ENCODE measurements at regions of chr5 and their contacts with region 1.

Region 1: GRCh38 chr5:56270568-56271392 is 37.6 kb upstream of the ANKRD55 start:
- DNase-seq: peak; percentile 65
- H3K4me3 Mint-ChIP-seq: peak overlapping the region; percentile 48
- H3K27ac Mint-ChIP-seq: peak overlapping the region; percentile 46
- H3K4me1 Mint-ChIP-seq: peaks cover 21% of the 10 kb centered on the region
- H3K27me3 Mint-ChIP-seq: no peaks in the 10 kb centered on the region

Region 2: GRCh38 chr5:56350598-56351170 is 79.9 kb after region 1 on chr5:
- intact Hi-C with region 1: loop called (anchors 1 kb)
- DNase-seq: no peak
- H3K4me3 Mint-ChIP-seq: no peak overlapping the region
- H3K27ac Mint-ChIP-seq: no peak overlapping the region
- H3K4me1 Mint-ChIP-seq: peaks cover 23% of the 10 kb centered on the region
- H3K27me3 Mint-ChIP-seq: peaks cover 2% of the 10 kb centered on the region

Region 3: DNA sequence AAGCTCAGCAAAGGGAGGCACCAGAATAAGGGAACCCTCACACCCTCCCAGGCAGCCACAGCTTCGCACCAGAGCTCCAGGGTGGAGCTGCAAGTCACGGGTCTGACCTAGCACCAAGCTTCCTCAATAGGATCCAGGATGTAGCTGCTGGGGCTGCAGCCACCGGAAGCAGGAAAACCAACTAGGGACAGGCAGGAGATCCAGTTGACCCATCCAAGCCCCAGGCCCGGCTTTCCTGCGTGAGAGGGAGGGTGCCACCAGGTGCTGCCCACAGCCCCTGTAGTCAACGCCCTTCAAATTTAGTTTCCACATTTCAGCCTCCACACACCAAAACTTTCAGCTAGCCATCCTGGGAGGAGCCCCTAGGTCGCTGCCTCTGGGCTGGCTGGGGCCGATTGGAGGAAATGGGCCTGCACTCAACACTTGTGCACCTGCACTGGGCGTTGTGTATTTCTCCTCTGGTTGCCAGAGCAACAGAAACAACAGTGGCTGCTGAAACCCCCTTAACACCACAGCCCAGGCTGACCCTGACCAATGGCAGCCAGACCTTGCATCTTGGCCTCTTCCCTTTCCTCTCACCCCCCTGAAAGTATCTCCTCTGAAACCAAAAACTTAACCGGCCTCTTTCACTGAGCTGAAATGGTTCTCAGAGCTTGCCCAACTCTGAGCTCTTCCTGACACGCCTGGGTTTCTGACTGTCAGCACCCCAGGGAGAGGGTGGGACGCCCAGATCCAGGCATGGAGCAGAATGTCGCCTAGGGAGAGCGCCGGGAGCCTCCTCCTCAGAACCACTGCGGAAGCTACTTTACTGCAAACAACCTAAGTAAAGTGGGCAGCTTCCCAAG is 318.1 kb after region 1 on chr5:
- intact Hi-C with region 1: loop called (anchors 5 kb)
- DNase-seq: peak; percentile 65
- H3K4me3 Mint-ChIP-seq: peak overlapping the region; percentile 19
- H3K27ac Mint-ChIP-seq: peak overlapping the region; percentile 78
- H3K4me1 Mint-ChIP-seq: peaks cover 50% of the 10 kb centered on the region
- H3K27me3 Mint-ChIP-seq: peaks cover 7% of the 10 kb centered on the region

Region 4: GRCh38 chr5:56649569-56649968 is 378.8 kb after region 1 on chr5:
- intact Hi-C with region 1: no loop called
- DNase-seq: no peak
- H3K4me3 Mint-ChIP-seq: no peak overlapping the region
- H3K27ac Mint-ChIP-seq: no peak overlapping the region
- H3K4me1 Mint-ChIP-seq: peaks cover 18% of the 10 kb centered on the region
- H3K27me3 Mint-ChIP-seq: peaks cover 13% of the 10 kb centered on the region

Region 5: DNA sequence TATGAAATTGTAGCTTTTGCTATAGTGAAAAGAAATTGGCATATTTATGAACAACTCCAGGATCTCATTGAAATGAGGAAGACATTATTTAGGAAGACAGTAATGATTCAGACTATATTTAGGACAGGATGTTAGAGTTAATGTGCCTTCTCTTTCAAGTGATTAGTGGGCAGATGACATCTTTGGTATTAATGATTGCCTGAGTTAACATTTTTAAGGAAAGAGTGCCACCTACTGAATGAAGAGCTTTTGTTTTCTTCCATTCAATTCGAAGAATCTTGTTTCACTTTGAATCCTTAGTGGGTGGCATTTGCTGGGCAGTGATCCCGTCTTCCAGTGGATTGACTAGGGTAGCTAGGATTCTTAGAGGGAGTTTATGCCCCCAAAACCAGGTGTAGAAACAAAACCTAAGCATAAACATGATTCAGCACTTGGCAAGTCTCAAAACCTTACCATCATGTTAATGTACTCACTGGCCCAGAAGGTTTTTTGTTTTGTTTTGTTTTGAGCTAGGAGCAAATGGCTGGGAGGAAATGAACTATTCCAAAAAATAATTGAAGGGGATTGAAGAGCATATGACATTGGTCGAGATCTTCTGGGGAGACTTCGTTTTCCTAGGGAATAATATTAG is 567.7 kb after region 1 on chr5:
- intact Hi-C with region 1: loop called (anchors 1 kb)
- DNase-seq: no peak
- H3K4me3 Mint-ChIP-seq: peak overlapping the region; percentile 25
- H3K27ac Mint-ChIP-seq: no peak overlapping the region
- H3K4me1 Mint-ChIP-seq: peaks cover 58% of the 10 kb centered on the region
- H3K27me3 Mint-ChIP-seq: no peaks in the 10 kb centered on the region

Region 6: GRCh38 chr5:57221049-57221568 is 950.3 kb after region 1 on chr5:
- intact Hi-C with region 1: loop called (anchors 5 kb)
- DNase-seq: peak; percentile 17
- H3K4me3 Mint-ChIP-seq: no peak overlapping the region
- H3K27ac Mint-ChIP-seq: no peak overlapping the region
- H3K4me1 Mint-ChIP-seq: peaks cover 18% of the 10 kb centered on the region
- H3K27me3 Mint-ChIP-seq: no peaks in the 10 kb centered on the region